ENCODE measurements at regions of chr5 and their contacts with region 1.

Region 1: DNA sequence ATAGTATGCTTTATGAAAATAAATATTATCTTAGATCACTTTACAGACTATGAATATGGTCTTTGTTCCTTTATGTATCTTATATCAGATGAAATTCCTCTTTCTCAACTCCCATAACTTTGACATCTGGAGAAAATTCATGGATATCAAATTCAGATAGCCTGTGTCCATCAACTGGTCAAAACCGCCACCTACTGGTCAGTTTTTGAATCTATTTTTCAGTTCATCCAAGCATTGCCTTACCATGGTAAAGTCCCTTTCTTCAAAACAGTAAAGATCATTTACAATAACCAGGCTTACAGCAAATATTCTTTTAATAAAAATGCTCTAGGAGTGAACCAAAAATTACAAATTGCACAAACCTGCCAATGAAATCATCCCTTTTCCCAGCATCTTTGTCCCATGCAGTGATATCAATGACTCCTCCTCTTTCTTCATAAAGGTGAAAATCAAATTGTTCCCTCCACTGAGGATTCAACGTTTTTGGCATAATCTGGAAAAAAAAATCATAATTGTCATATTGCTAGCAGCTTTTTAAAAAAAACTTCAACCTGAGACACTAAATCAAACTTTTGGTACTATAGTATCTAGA is 290.5 kb downstream of the SLF1 start:
- DNase-seq: peak; percentile 14
- ATAC-seq: no peak
- H3K4me3 Mint-ChIP-seq: no peak overlapping the region
- H3K27ac Mint-ChIP-seq: no peak overlapping the region
- H3K4me1 Mint-ChIP-seq: no peaks in the 10 kb centered on the region
- H3K27me3 Mint-ChIP-seq: no peaks in the 10 kb centered on the region

Region 2: DNA sequence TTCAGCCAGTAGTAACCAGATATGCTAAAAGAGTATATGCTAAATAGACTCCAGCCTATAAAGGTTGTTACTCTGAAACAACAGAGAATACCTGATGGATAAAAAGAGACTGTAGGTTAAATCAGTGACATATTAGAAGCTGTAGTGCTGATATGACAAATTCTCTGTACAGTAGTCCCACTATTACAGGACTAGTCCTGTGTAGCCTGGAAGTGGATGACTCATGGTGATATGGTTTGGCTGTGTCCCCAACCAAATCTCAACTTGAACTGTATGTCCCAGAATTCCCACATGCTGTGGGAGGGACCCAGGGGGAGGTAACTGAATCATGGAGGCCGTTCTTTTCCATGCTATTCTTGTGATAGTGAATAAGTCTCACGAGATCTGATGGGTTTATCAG is 891.4 kb before region 1 on chr5:
- CTCF ChIA-PET with region 1: no interaction called
- POLR2A ChIA-PET with region 1: no interaction called
- intact Hi-C with region 1: no loop called
- DNase-seq: no peak
- ATAC-seq: no peak
- H3K4me3 Mint-ChIP-seq: no peak overlapping the region
- H3K27ac Mint-ChIP-seq: no peak overlapping the region
- H3K4me1 Mint-ChIP-seq: no peaks in the 10 kb centered on the region
- H3K27me3 Mint-ChIP-seq: no peaks in the 10 kb centered on the region

Region 3: GRCh38 chr5:94524841-94525697 is 383.9 kb before region 1 on chr5:
- CTCF ChIA-PET with region 1: no interaction called
- POLR2A ChIA-PET with region 1: no interaction called
- intact Hi-C with region 1: loop called in 1 of 2 experiments (anchors 5 kb)
- DNase-seq: peak; percentile 20
- ATAC-seq: peak; percentile 74
- H3K4me3 Mint-ChIP-seq: no peak overlapping the region
- H3K27ac Mint-ChIP-seq: no peak overlapping the region
- H3K4me1 Mint-ChIP-seq: no peaks in the 10 kb centered on the region
- H3K27me3 Mint-ChIP-seq: no peaks in the 10 kb centered on the region

Region 4: GRCh38 chr5:94618493-94619328 is 290.3 kb before region 1 on chr5 and contains the starts of genes KIAA0825 and SLF1:
- CTCF ChIA-PET with region 1: no interaction called
- POLR2A ChIA-PET with region 1: no interaction called
- intact Hi-C with region 1: no loop called
- DNase-seq: peak; percentile 94
- ATAC-seq: peak; percentile 90
- H3K4me3 Mint-ChIP-seq: peak within 1 kb of the TSS; percentile 84
- H3K27ac Mint-ChIP-seq: peak within 1 kb of the TSS; percentile 95
- H3K4me1 Mint-ChIP-seq: peaks cover 36% of the 10 kb centered on the region
- H3K27me3 Mint-ChIP-seq: no peaks in the 10 kb centered on the region
- total RNA-seq, gene KIAA0825: 1.1 to 1.3 TPM
- total RNA-seq, gene SLF1: 13.3 to 13.6 TPM

Region 5: GRCh38 chr5:94830520-94830919 is 78.5 kb before region 1 on chr5:
- CTCF ChIA-PET with region 1: interaction called, 4 read pairs
- POLR2A ChIA-PET with region 1: no interaction called
- intact Hi-C with region 1: loop called in 1 of 2 experiments (anchors 5 kb)
- DNase-seq: peak; percentile 14
- ATAC-seq: no peak
- H3K4me3 Mint-ChIP-seq: no peak overlapping the region
- H3K27ac Mint-ChIP-seq: no peak overlapping the region
- H3K4me1 Mint-ChIP-seq: no peaks in the 10 kb centered on the region
- H3K27me3 Mint-ChIP-seq: peaks cover 11% of the 10 kb centered on the region

Region 6: DNA sequence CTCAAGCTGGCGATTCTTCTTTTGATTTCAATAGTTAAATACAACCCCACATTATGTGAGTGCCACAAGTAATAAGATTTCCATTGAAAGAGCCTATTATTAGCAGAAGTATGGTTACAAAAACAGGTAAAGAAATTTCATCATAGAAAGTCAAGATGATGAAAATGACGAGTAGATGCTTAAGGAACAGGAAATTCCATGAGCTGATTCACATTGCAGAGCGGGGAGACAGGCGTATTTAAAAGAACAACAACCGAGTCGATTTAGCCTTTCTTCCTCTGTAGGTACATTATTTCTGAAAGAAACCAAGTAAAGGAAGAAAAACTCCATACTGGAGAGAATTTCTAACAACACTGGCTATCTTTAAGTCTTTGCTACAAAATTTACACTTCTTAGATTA is 19.9 kb after region 1 on chr5:
- CTCF ChIA-PET with region 1: no interaction called
- POLR2A ChIA-PET with region 1: no interaction called
- intact Hi-C with region 1: no loop called
- DNase-seq: no peak
- ATAC-seq: no peak
- H3K4me3 Mint-ChIP-seq: no peak overlapping the region
- H3K27ac Mint-ChIP-seq: no peak overlapping the region
- H3K4me1 Mint-ChIP-seq: no peaks in the 10 kb centered on the region
- H3K27me3 Mint-ChIP-seq: peaks cover 5% of the 10 kb centered on the region

Measured in activated CD4-positive, alpha-beta T cell treated with anti-CD3 and anti-CD28 coated beads for 36 hours (primary cell).